Calu3 (cell line): ENCODE measurements at regions of chr14 and their contacts with region 1.

Region 1: GRCh38 chr14:45253068-45253753 is at the start of gene MIS18BP1:
- DNase-seq: peak; percentile 95
- H3K4me3 Mint-ChIP-seq: peak within 1 kb of the TSS; percentile 94
- H3K27ac Mint-ChIP-seq: peak within 1 kb of the TSS; percentile 94
- H3K4me1 Mint-ChIP-seq: peaks cover 7% of the 10 kb centered on the region
- H3K27me3 Mint-ChIP-seq: no peaks in the 10 kb centered on the region
- CTCF ChIP-seq: peak; percentile 69
- total RNA-seq, gene MIS18BP1: 37.7 and 47.4 TPM in 2 replicates

Region 2: DNA sequence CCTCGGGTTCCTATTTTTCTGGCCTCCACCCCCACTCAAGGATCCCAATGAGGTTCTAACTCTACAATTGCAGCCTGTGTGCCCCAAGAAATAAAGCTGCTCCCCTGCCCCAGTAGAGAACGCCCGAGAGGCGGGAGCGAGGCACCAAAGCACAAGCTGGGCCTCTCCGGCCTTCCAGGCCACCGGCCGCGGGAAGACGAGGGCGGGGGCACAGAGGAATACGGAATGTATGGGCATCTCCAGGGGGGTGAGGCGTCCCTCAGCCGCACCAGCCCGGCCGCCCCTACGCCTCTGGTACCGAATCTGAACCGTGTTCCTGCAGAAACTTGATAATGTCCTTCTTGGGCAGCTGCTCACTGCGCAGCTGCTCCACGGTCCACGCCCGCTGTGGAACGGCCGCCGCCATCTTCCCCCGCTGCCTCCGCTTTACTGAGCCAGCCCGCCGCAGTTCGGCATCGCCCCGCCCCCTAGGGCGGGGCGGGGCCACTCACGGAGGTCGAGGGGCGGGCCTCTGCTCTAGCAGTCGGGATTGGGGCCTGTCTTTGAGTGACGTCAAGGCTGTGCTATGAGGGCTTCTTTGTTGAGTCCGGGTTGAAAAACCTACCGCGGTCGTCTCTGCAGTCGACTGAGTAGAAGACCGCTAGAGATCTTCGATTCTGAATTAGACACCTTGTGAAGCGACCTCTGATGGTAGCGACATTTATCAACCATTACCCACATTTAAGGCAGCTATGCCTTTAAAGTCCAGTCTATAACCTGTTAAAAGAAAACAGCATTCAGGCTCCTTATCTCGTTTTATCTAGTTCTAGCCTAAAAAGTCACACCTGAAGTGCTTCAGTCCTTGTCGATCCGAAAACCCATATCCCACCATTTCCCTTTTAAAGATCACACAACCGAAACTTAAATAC is 118.9 kb before region 1 on chr14 and contains the start of gene FKBP3:
- CTCF ChIA-PET with region 1: no interaction called
- intact Hi-C with region 1: loop called (anchors 5 kb)
- DNase-seq: peak; percentile 92
- H3K4me3 Mint-ChIP-seq: peak within 1 kb of the TSS; percentile 96
- H3K27ac Mint-ChIP-seq: peak within 1 kb of the TSS; percentile 93
- H3K4me1 Mint-ChIP-seq: peaks cover 16% of the 10 kb centered on the region
- H3K27me3 Mint-ChIP-seq: no peaks in the 10 kb centered on the region
- CTCF ChIP-seq: no peak
- total RNA-seq, gene FKBP3: 68.9 and 72.8 TPM in 2 replicates

Region 3: GRCh38 chr14:45332360-45332988 is 79.3 kb after region 1 on chr14:
- CTCF ChIA-PET with region 1: no interaction called
- intact Hi-C with region 1: no loop called
- DNase-seq: no peak
- H3K4me3 Mint-ChIP-seq: no peak overlapping the region
- H3K27ac Mint-ChIP-seq: no peak overlapping the region
- H3K4me1 Mint-ChIP-seq: no peaks in the 10 kb centered on the region
- H3K27me3 Mint-ChIP-seq: peaks cover 15% of the 10 kb centered on the region
- CTCF ChIP-seq: no peak